Activated CD8-positive, alpha-beta memory T cell treated with anti-CD3 and anti-CD28 coated beads, Interleukin-2, amount 10 ng/mL, durations not matched to agents 7 days and 5 days (primary cell): ENCODE measurements at regions of chr15 and their contacts with region 1.

Region 1: GRCh38 chr15:31365655-31366127 is 39.1 kb downstream of the KLF13 start:
- DNase-seq: peak; percentile 93
- ATAC-seq: peak; percentile 66
- H3K4me3 Mint-ChIP-seq: peak overlapping the region; percentile 58
- H3K27ac Mint-ChIP-seq: peak overlapping the region; percentile 100
- H3K4me1 Mint-ChIP-seq: peaks cover 100% of the 10 kb centered on the region
- H3K27me3 Mint-ChIP-seq: no peaks in the 10 kb centered on the region

Region 2: DNA sequence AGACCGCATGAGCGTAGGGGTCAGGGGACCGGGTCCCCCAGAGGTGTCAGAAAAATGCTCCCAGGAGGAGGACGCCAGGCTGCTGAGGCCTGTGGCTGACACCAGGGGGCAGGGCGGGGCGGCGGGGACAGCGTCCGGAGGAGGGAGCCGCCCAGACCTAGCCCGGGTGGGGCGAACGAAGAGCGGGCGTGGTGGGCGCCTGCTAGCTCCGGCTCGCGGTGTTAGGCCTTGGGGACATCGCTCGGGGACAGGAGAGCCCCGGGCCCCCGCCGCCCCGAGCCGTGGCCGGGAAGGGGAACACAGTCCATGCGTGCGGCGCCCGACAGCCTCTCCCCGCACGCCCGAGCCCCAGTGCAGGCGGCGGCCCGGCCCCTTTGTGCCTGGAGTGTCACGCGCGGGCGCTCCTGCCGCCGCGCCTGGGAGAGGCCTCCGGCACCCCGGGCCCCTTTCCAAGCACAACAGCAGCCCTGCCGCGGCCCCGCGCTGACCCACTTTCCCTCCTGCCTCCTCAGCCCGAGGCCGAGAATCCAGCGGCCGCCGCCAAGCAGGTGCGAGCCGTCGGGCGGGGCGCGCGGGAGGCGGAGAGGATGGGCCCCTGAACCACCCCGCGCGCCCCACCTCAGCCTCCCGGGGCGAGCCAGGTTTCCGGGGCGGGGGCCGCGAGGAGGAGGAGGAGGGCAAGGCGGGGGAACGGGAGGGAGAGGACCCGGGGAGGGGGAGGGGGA is 150.0 kb before region 1 on chr15:
- CTCF ChIA-PET with region 1: interaction called, 14 read pairs
- DNase-seq: peak; percentile 90
- ATAC-seq: peak; percentile 88
- H3K4me3 Mint-ChIP-seq: peak overlapping the region; percentile 69
- H3K27ac Mint-ChIP-seq: peak overlapping the region; percentile 81
- H3K4me1 Mint-ChIP-seq: peaks cover 29% of the 10 kb centered on the region
- H3K27me3 Mint-ChIP-seq: no peaks in the 10 kb centered on the region

Region 3: GRCh38 chr15:31228985-31229826 is 136.5 kb before region 1 on chr15:
- CTCF ChIA-PET with region 1: no interaction called
- DNase-seq: no peak
- ATAC-seq: no peak
- H3K4me3 Mint-ChIP-seq: no peak overlapping the region
- H3K27ac Mint-ChIP-seq: no peak overlapping the region
- H3K4me1 Mint-ChIP-seq: peaks cover 6% of the 10 kb centered on the region
- H3K27me3 Mint-ChIP-seq: peaks cover 7% of the 10 kb centered on the region

Region 4: DNA sequence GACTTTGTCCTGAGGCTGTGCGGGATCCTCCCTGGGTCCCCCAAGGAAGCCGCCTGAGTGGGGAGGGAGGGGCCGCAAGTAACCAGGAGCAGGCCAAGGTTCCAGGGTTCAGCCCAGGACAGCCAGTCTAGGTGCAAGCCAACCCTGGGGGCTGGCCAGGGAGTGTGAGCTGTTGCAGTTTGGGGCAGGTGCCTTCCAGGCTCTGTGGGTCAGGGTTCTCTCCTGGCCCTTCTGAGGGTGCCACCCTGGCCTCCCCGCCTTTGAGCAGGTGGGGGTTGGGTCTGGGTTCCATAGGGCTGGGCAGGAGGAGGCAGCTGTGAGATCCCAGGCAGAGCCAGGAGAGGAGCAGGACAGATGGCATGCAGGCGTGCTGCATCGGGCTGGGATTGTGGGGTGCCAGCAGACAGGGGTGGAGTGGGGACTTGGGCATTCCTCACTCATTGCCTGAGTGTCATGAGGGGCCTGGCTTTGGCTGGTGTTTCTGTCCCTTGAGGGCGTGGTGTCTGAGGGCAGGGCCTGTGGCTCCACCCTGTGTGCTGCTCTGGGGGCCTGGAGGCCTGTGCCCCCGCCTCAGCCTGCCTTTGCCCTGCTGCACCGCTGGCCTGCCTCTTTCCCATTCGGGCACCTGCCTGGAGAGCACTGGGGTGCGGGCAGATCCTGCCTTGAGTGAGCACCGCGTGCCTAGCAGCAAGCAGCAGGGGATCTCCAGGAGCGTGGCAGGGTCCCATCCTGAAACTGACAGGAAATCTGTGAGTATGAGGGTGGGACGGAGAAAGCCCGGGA is 20.7 kb before region 1 on chr15:
- CTCF ChIA-PET with region 1: interaction called, 48 read pairs
- DNase-seq: peak; percentile 69
- ATAC-seq: peak; percentile 41
- H3K4me3 Mint-ChIP-seq: peak overlapping the region; percentile 95
- H3K27ac Mint-ChIP-seq: peak overlapping the region; percentile 97
- H3K4me1 Mint-ChIP-seq: peaks cover 95% of the 10 kb centered on the region
- H3K27me3 Mint-ChIP-seq: no peaks in the 10 kb centered on the region

Region 5: DNA sequence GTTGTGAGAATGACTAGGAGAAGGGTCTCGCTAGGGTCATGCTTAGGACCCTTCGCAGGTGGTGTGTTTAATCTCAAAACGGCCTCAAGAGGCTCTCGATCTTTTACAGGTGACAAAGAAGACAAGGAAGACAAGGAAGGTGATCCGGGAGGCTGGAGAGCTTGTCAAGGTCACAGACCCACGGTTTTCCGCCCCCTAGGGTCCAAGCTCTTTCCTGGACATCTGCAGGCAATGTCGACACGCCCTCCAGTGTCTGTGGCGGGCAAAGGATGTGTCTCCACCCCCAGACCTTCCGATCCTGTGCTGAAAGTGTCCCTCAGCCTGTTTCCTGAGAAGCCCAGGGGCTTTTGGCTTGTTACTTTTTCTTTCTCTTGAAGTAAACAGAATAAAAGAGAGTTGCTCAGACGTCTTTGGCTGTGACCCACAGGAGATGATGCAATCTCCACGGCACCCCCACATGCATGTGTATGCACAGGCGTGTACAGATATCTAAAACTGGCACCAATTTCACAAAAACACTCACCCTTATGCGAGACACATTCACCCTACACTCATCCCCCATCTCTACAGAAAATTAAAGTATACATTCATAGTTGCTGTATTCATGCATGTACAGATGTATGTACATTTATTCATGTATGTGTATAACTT is 69.7 kb after region 1 on chr15:
- CTCF ChIA-PET with region 1: interaction called, 215 read pairs
- DNase-seq: peak; percentile 95
- ATAC-seq: peak; percentile 72
- H3K4me3 Mint-ChIP-seq: peak overlapping the region; percentile 68
- H3K27ac Mint-ChIP-seq: peak overlapping the region; percentile 94
- H3K4me1 Mint-ChIP-seq: peaks cover 70% of the 10 kb centered on the region
- H3K27me3 Mint-ChIP-seq: no peaks in the 10 kb centered on the region

Region 6: DNA sequence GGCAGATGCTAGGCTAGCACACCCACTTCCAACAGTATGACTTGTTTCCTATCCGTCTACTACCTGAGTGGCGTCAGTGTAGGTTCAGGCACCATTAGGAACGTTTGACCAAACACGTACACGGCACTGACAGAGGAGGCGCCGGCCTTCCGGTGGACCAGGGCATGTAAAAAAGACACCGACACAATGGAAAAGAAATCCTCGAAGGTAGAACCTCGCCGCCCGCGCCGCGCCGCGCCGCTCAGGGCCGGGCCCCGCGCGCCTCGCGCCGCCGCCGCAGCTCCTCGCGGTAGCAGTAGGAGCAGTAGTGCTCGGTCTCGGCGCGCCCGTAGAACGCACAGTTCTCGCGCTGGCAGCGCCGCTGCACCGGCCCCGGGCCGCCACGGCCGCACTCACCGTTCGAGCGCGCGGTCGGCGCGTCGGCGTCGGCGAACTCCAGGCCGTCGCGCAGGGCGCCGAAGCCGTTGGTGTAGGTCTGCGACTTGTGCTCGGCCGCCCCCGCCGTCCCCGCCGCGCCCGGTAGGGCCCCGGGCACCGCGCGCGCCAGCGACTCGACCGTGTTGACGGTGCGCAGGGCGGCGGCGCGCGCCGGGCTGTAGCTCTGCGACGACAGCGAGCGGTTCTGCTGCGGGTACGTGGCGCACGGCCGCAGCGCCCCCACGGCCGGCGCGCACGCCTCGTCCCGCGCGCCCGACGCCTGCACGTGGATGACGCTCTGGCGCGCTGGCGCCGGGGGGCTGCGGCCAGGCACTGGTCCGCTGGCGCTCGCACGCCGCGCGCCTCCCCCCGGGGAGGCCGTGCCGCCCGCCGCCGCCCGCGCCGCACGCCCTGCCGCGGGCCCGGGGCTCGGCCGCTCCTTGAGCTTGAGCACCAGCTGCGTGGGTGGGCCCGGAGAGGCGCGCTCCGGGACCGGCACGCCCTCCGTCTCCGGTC is 117.6 kb after region 1 on chr15:
- CTCF ChIA-PET with region 1: interaction called, 65 read pairs
- DNase-seq: peak; percentile 79
- ATAC-seq: peak; percentile 72
- H3K4me3 Mint-ChIP-seq: peak overlapping the region; percentile 89
- H3K27ac Mint-ChIP-seq: peak overlapping the region; percentile 96
- H3K4me1 Mint-ChIP-seq: peaks cover 71% of the 10 kb centered on the region
- H3K27me3 Mint-ChIP-seq: no peaks in the 10 kb centered on the region